PC-9 (cell line): ENCODE measurements at regions of chr1 and their contacts with region 1.

Region 1: GRCh38 chr1:23657659-23658275 is 33.8 kb upstream of the RPL11 start:
- DNase-seq: peak in 1 of 2 experiments; percentile 45
- H3K4me3 ChIP-seq: no peak overlapping the region
- H3K27ac ChIP-seq: no peak overlapping the region
- H3K4me1 ChIP-seq: no peaks in the 10 kb centered on the region
- H3K27me3 ChIP-seq: no peaks in the 10 kb centered on the region
- CTCF ChIP-seq: peak; percentile 74

Region 2: DNA sequence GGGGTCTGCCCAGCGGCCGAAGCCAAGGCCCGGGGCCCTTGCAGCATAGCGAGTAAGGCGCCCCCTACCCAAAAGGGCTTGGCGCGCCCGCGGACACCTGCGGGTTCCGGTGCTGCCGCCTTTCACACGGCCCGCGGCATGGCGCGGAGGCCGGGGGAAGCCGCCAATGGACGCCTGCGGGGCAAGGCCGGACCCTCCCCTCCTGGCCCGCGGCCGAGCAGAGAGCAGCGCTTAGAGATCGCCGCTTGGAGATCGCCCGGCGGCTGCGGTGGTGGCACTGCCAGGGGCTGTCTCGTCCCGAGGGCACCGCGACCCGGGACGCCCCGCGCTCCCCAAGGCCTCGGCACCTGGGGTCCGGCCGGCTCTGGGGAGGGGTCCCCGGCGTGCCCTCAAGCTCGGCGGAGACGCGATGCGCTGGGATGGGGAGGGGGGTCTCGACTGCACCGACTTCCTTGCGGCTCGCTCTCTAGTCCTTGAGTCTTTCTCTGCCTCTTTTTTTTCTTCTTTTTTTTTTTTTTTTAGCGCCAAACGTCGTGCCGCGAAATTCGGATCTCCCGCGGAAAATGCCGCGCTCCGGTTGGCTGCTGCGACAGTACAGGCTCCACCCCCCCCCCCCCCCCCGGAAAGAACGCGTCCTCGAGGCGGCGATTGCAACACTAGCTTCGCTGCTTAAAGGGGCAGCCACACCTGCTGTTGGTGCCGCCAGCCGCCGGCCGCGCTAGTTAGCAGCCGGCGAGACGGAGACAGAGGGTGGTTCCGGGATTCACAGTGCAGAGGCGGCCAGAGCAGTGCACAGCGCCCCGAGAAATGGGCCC is 126.8 kb before region 1 on chr1 and contains the start of gene E2F2:
- CTCF ChIA-PET with region 1: interaction called, 12 read pairs
- POLR2A ChIA-PET with region 1: no interaction called
- intact Hi-C with region 1: no loop called
- DNase-seq: peak; percentile 70 to 73
- H3K4me3 ChIP-seq: peak within 1 kb of the TSS; percentile 65
- H3K27ac ChIP-seq: peak within 1 kb of the TSS; percentile 12; the same call in 1 of the 2 replicates
- H3K4me1 ChIP-seq: peaks cover 70% of the 10 kb centered on the region
- H3K27me3 ChIP-seq: no peaks in the 10 kb centered on the region
- CTCF ChIP-seq: no peak; the same call in 1 of the 2 replicates
- total RNA-seq, gene E2F2: 7.6 and 9.0 TPM in 2 replicates

Region 3: DNA sequence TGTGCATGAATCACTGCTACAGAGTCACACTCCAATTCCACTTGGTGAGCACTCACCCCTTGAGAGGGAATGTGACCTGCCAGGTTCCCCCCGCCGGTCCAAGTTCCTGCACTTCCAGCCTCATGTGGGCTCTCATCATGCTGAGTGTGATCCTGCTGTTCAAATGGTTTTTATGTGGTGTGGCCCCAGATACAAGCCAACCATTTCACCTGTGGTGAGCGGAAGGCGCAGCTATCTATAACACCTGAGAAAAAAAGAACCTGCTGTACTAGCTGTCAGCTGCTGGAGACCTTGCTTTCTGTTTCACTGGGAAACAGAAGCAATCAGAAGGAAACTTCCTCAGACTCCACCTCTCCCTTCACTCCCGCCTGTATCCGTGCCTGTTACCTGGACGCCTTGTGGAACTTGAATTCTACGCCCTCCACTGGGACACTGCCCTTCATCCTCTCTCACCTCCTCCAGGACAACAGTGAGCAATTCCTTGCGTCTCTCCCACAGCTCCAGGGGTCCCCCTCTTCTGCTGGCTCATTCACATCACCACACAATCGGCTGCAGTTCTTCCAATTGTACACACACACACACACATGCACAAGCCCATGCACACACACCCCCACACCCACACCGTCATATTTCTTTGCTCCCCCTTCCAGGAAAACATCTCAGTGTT is 30.6 kb before region 1 on chr1:
- CTCF ChIA-PET with region 1: interaction called, 13 read pairs
- POLR2A ChIA-PET with region 1: no interaction called
- intact Hi-C with region 1: no loop called
- DNase-seq: peak; percentile 26 to 48
- H3K4me3 ChIP-seq: peak overlapping the region; percentile 20; the same call in 1 of the 2 replicates
- H3K27ac ChIP-seq: no peak overlapping the region
- H3K4me1 ChIP-seq: no peaks in the 10 kb centered on the region; the same call in 1 of the 2 replicates
- H3K27me3 ChIP-seq: no peaks in the 10 kb centered on the region
- CTCF ChIP-seq: no peak